ENCODE measurements at regions of chr15 and their contacts with region 1.

Region 1: DNA sequence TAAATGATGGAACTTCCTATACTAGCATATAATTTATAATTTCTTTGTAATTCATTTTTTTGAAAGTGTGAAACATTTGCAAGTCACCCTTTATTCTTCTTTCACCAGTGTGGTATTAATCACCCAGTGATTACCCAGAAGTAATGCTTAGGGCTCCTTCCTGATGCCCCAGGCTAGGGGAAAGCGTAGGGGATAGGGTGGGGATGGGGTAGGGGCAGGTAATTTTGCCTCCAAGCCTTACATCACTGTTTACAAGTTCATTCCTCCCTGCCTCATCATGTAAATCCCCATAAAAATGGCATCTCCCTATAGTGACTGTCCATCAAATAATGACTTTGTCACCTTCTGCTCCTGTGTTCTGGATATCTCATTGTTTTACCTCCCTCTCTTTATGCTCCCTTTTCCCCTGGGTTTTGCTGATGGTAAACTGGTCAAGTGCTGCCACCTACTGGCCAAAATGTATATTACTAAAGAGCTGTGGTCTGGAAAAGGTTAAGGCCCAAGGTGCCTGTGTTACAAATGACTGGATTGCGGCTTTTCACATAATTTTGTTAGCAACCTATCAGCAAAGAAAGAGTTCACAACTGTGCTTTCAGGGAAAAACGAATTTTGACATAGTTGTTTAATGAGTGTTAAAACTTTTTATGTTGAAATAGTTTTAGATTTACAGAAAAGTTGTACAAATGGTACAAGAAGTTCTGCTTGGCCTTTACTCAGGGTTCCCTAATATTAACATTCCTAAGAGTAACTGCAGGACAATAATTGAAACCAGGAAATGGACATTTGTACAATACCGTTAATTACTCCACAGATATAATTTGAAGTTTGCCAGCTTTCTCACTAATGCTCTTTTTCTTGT is 54.7 kb downstream of the ONECUT1 start:
- DNase-seq: no peak
- ATAC-seq: peak; percentile 86

Region 2: GRCh38 chr15:52256366-52256765 is 479.1 kb before region 1 on chr15:
- intact Hi-C with region 1: loop called (anchors 2 kb)
- DNase-seq: peak; percentile 50
- ATAC-seq: peak; percentile 62

Region 3: GRCh38 chr15:52626671-52627369 is 108.6 kb before region 1 on chr15:
- intact Hi-C with region 1: loop called (anchors 10 kb)
- DNase-seq: no peak
- ATAC-seq: no peak

Region 4: GRCh38 chr15:52651868-52652267 is 83.6 kb before region 1 on chr15:
- intact Hi-C with region 1: no loop called
- DNase-seq: peak; percentile 58
- ATAC-seq: peak; percentile 99

Measured in left ventricle myocardium superior (tissue), 1 donor.